Thyroid gland (tissue), 4 donors: ENCODE measurements at regions of chr1 and their contacts with region 1.

Region 1: DNA sequence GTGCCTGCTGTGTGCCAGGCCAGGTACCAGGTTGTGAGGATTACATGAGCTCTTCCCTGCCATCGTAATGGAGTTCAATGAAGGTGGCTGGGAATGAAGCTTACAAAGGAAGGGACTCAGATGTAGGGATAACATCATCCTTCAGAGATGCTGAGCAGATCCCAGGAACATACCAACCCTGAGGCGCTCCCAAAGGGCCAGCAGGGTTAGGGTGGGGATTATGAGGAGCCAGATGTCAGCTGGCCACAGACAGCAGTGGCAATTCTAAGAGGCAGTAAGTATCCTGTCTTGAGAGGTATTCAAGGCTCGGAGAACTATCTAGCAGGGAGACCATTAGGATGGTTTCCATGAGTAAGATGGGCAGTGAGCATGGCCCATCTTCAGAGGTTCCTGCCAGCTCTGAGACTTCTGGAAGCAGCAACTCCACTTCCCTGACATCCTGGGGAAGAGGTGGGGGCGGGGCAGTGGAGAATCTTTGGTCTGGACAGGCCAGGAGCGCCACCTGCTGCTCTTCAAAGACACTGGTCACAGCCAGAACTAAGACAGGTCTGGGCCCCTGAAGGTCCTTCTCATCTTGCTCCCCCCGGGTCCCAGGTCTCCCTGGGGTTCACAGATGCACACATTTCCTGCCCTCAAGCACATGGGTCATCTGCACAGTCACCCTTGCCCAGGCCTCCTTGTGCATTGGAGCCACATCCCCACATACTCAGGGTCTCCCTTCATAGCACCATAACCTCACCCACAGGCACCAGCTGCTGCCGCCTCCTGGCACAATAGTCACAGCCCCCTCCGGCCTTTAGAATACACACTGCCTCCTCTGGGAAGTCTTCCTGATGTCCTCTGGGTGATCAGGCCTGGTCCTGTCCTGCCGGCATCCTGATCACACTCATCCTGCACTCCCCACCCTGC is 2.7 kb upstream of the SDC3 start:
- DNase-seq: peak; percentile 91 to 92
- H3K4me3 ChIP-seq: no peak overlapping the region
- H3K27ac ChIP-seq: no peak overlapping the region
- H3K4me1 ChIP-seq: peaks cover 19 to 35% of the 10 kb centered on the region in 2 donors
- H3K27me3 ChIP-seq: no peaks in the 10 kb centered on the region
- CTCF ChIP-seq: peak; percentile 60 to 92 (median 88)
- POLR2A ChIP-seq: no peak

Region 2: GRCh38 chr1:30719406-30720270 is 191.7 kb before region 1 on chr1:
- intact Hi-C with region 1: loop called (anchors 2 kb)
- DNase-seq: no peak
- H3K4me3 ChIP-seq: peak overlapping the region in 1 of 3 donors; percentile 52
- H3K27ac ChIP-seq: peak overlapping the region in 2 of 3 donors; percentile 98 to 99
- H3K4me1 ChIP-seq: peaks cover 12 to 23% of the 10 kb centered on the region in 2 donors
- H3K27me3 ChIP-seq: no peaks in the 10 kb centered on the region
- CTCF ChIP-seq: no peak
- POLR2A ChIP-seq: no peak

Region 3: GRCh38 chr1:30779294-30780071 is 131.8 kb before region 1 on chr1:
- intact Hi-C with region 1: loop called (anchors 5 kb)
- DNase-seq: peak; percentile 82 to 86
- H3K4me3 ChIP-seq: no peak overlapping the region
- H3K27ac ChIP-seq: no peak overlapping the region
- H3K4me1 ChIP-seq: peaks cover 3 to 4% of the 10 kb centered on the region in 2 donors
- H3K27me3 ChIP-seq: no peaks in the 10 kb centered on the region
- CTCF ChIP-seq: peak; percentile 95 to 98 (median 96)
- POLR2A ChIP-seq: no peak

Region 4: DNA sequence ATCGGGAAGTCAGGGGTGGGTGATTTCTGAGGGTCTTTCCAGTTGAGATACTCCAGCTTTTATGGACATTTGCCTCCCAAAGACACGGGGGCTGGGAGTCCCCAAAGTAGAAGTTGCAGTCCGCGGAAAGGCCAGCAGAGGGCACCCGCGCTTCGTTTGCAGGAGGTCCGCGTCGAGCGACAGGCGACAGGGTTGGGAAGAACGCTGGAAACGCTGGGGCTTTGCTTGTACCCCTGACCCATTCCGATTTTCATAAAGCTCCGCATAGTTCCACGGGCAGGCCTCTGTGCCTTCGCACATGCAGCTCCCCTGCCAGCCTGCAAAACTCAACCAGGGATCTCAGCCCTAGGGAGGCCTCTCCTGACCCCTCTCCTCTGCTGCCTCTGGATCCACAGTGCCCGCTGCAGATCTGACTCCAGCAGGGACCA is 109.5 kb before region 1 on chr1:
- intact Hi-C with region 1: loop called (anchors 5 kb)
- DNase-seq: peak; percentile 77 to 79
- H3K4me3 ChIP-seq: no peak overlapping the region
- H3K27ac ChIP-seq: no peak overlapping the region
- H3K4me1 ChIP-seq: peaks cover 0 to 28% of the 10 kb centered on the region in 2 donors
- H3K27me3 ChIP-seq: no peaks in the 10 kb centered on the region
- CTCF ChIP-seq: peak; percentile 87 to 97 (median 94)
- POLR2A ChIP-seq: no peak